ENCODE measurements at regions of chr2 and their contacts with region 1.

Region 1: GRCh38 chr2:187453078-187453641 is 5.1 kb upstream of the CALCRL start:
- DNase-seq: no peak
- H3K4me3 ChIP-seq: no peak overlapping the region
- H3K27ac ChIP-seq: no peak overlapping the region
- H3K27me3 ChIP-seq: no peaks in the 10 kb centered on the region
- CTCF ChIP-seq: peak; percentile 53

Region 2: DNA sequence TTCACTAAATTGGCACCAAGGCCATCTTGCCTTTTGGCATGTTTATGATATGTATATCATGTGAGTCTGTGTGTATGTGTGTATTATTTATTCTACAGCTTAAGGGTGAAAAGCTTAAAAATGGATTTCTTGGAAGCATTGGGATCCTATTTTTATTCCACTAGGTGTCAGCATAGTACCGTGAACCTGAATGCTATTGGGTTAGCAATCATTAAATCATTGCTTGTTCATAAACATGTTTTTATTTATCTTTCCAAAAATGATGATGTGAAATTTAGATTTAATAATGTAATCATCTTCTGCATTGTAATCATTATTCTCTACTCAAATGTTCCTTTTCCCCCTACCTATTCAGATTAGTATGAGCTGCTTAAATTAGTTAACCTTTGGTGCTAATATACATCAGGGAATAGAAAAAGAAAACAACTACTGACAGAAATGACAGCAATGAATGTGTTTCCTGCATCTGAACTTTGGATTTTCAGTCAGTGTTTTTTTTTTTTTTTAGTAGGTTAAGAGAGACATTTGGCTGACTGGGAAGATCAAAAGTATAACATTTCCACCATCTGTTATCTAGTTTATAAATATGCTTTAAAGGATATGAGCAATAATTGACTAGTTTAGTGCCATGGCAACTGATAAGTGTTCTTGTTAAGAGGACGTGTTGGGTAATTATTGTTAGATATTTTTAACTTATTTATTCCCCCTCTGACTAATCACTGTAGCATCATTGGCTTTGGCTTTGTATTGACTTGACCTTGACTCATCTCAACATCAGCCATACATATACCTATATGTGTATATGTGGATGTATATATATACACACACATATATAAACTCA is 590.1 kb before region 1 on chr2:
- CTCF ChIA-PET with region 1: interaction called, 72 read pairs
- POLR2A ChIA-PET with region 1: no interaction called
- DNase-seq: no peak
- H3K4me3 ChIP-seq: no peak overlapping the region
- H3K27ac ChIP-seq: no peak overlapping the region
- H3K27me3 ChIP-seq: no peaks in the 10 kb centered on the region
- CTCF ChIP-seq: peak; percentile 73

Region 3: DNA sequence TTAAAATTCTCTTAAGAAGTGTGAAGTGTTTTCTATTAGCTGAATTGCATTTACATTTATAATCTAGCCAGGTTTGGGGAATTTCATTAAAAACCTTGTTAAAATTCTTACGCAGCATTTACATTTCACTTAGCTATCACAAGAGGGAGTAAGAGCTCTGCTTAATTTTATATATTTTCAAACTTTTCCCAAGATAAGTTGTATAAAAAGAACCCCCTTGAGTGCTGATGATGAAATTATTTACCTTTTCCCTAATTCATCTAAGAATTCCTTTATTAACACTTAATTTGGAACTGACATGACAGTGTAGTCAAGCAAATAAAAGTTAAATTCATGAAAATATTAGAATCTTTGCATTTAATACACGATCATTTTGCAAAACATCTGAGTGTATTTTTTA is 549.9 kb before region 1 on chr2:
- CTCF ChIA-PET with region 1: interaction called, 21 read pairs
- POLR2A ChIA-PET with region 1: no interaction called
- DNase-seq: no peak
- H3K4me3 ChIP-seq: no peak overlapping the region
- H3K27ac ChIP-seq: no peak overlapping the region
- H3K27me3 ChIP-seq: no peaks in the 10 kb centered on the region
- CTCF ChIP-seq: peak; percentile 64

Region 4: DNA sequence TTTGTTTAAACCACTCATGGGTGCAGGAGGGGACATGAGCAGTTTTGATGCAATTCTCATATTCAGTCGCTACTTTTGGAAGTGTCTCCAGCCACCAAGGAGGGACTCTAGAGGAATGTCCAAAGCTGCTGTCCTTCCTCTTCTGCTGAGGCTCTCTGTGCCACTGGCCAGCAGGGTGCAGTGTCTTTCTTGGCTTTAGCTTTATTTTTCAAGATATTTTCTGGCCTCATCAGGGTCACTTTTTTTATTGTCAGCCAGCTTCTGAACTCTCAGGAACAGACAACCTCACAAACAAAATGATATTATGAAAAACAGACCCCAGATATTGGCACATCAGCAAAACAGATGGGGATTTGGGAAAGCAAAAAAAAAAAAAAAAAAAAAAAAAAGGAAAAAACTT is 314.9 kb before region 1 on chr2:
- CTCF ChIA-PET with region 1: interaction called, 20 read pairs
- POLR2A ChIA-PET with region 1: no interaction called
- DNase-seq: no peak
- H3K4me3 ChIP-seq: no peak overlapping the region
- H3K27ac ChIP-seq: no peak overlapping the region
- H3K27me3 ChIP-seq: no peaks in the 10 kb centered on the region
- CTCF ChIP-seq: peak; percentile 72

Measured in AG04450 (cell line).